HCT116 (cell line): ENCODE measurements at regions of chr5 and their contacts with region 1.

Region 1: DNA sequence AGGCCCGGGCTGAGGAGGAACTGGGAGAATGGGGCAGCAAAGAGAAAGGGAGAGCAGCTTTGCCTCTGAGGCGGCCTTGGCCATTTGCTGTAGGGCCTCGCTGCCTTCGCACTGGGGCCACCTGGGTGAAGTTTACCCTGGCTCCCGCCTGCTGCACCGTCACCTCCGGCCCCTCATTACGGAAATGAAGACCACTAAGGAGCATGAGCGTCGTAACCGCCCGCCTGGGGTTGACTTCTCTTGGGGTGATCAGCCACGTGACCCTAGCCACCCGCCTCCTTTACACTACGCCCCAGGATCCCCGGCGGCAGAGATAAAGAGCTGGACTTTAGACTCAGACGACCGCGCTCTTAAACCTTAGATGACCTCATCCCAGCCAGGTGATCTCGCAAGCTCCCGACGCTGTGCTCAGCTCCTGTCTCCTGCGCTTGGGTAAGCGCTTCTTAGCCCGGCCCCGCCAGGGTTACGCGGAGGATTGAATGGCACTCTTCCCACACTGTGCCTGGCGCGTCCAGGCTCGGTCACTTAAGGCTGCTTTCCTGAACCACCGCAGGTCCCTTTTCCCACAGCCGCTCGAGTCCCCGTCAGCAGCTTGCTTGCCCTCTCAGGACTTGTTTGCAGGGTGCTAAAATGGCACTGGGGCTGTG is 107.9 kb upstream of the LARP1 start:
- DNase-seq: no peak
- ATAC-seq: no peak
- H3K4me3 ChIP-seq: no peak overlapping the region
- H3K27ac ChIP-seq: no peak overlapping the region
- H3K4me1 ChIP-seq: no peaks in the 10 kb centered on the region
- H3K27me3 ChIP-seq: no peaks in the 10 kb centered on the region
- CTCF ChIP-seq: no peak
- POLR2A ChIP-seq: no peak
- RAD21 ChIP-seq: no peak

Region 2: DNA sequence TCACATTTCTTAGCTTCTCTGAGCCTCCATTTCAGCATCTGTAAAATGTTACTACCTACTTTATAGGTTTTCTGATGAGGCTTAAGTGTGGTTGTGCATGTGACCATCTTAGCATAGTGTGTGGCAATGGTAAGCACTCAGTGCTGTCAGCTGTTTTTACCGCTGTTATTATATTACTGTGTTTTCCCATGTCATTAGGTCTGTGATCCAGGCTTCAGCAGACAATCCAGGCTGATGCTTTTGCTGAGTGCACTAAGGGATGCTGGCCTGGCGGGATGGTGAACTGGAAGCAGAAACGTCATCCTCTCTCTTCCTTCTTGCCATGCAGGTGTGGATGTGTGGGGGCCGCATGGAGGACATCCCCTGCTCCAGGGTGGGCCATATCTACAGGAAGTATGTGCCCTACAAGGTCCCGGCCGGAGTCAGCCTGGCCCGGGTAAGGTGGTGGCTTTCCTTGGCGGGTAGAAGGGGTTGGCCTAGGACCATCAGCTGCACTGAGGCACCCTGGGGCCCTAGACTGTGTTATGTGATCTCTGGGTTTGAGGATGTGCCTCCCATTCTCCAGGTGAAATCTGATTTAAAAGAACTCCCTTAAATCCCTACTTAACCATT is 243.4 kb before region 1 on chr5:
- CTCF ChIA-PET with region 1: no interaction called
- POLR2A ChIA-PET with region 1: no interaction called
- RAD21 ChIA-PET with region 1: no interaction called
- intact Hi-C with region 1: no loop called
- DNase-seq: no peak
- ATAC-seq: no peak
- H3K4me3 ChIP-seq: no peak overlapping the region
- H3K27ac ChIP-seq: no peak overlapping the region
- H3K4me1 ChIP-seq: peaks cover 8 to 23% of the 10 kb centered on the region in 2 experiments; a peak in 3 of 4 replicates
- H3K27me3 ChIP-seq: no peaks in the 10 kb centered on the region
- CTCF ChIP-seq: no peak
- POLR2A ChIP-seq: no peak
- RAD21 ChIP-seq: no peak

Region 3: GRCh38 chr5:154415114-154415513 is 232.1 kb before region 1 on chr5:
- CTCF ChIA-PET with region 1: no interaction called
- POLR2A ChIA-PET with region 1: no interaction called
- RAD21 ChIA-PET with region 1: no interaction called
- intact Hi-C with region 1: no loop called
- DNase-seq: no peak
- ATAC-seq: no peak
- H3K4me3 ChIP-seq: no peak overlapping the region
- H3K27ac ChIP-seq: no peak overlapping the region
- H3K4me1 ChIP-seq: no peaks in the 10 kb centered on the region
- H3K27me3 ChIP-seq: no peaks in the 10 kb centered on the region
- CTCF ChIP-seq: no peak
- POLR2A ChIP-seq: no peak
- RAD21 ChIP-seq: no peak

Region 4: DNA sequence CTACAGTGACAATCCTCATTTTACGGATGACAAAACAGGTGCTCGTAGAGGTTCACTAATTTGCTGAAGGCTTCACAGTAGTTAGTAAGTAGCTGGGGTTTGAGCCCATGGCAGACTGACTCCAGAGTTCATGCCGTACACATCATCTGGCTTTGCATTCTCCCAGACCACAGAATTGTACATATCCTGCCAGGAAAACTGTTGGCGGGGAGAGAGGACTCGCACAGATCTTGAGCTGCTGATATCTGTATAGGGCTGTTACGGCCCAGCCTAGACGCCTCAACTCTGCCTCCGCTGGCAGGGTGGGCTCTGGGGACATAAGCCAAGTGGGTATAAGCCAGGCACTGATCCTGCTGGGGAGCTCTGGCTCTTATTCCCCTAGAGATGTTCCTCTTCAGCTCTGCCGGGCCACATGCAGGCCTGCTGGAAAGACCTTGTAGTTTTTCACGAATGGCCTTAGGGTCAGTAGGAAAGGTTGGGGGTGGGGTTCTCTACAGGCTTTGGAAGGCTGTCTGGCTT is 124.2 kb after region 1 on chr5:
- CTCF ChIA-PET with region 1: no interaction called
- POLR2A ChIA-PET with region 1: no interaction called
- RAD21 ChIA-PET with region 1: interaction called in 1 of 2 experiments, 11 read pairs
- intact Hi-C with region 1: no loop called
- DNase-seq: no peak
- ATAC-seq: no peak
- H3K4me3 ChIP-seq: no peak overlapping the region
- H3K27ac ChIP-seq: no peak overlapping the region
- H3K4me1 ChIP-seq: peaks cover 9 to 31% of the 10 kb centered on the region in 2 experiments; a peak in 3 of 4 replicates
- H3K27me3 ChIP-seq: no peaks in the 10 kb centered on the region
- CTCF ChIP-seq: no peak
- POLR2A ChIP-seq: no peak
- RAD21 ChIP-seq: no peak

Region 5: DNA sequence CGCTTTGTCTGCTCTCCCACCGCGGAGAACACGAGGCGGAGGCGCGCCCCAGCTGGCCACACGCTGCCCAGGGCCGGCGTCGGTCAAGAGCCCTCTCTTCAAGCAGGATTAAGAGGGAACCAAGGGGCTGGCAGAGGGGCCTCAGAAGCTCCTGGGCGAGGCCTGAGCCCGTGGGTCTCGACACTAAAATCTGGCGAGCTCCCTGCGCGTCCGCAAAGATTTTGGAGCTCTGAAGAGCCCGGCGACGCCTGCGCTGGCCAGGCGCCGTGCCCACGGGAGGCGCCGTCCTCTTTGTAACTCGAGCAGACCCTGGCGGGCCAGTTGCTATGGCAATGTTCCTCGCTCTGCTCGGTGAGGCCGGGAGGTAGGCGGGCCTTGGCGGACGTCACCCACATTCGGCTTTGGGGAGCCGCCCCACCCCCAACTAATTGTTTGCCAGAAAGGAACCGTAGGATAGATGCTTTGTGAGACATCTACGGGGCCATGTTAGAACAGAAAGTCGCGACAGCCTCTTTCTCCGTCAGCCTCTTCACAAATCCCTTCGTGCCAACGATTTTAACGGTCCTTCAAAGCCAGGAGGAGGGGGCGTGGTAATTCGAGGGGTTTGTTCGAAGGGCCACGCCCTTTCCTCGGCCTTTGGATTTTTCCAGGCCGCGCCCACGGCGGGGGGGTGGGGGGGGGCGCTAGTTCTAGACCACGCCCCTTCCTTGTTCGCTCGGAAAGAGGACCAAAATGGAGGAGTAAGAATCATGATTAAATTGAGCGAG is 210.5 kb after region 1 on chr5:
- CTCF ChIA-PET with region 1: interaction called, 3 read pairs
- POLR2A ChIA-PET with region 1: no interaction called
- RAD21 ChIA-PET with region 1: no interaction called
- intact Hi-C with region 1: loop called (anchors 2 kb)
- DNase-seq: peak; percentile 92
- ATAC-seq: peak; percentile 81
- H3K4me3 ChIP-seq: peak overlapping the region; percentile 76 to 95
- H3K27ac ChIP-seq: peak overlapping the region; percentile 94
- H3K4me1 ChIP-seq: peaks cover 17 to 22% of the 10 kb centered on the region in 2 experiments
- H3K27me3 ChIP-seq: no peaks in the 10 kb centered on the region
- CTCF ChIP-seq: no peak
- POLR2A ChIP-seq: peak; percentile 68
- RAD21 ChIP-seq: no peak

Region 6: DNA sequence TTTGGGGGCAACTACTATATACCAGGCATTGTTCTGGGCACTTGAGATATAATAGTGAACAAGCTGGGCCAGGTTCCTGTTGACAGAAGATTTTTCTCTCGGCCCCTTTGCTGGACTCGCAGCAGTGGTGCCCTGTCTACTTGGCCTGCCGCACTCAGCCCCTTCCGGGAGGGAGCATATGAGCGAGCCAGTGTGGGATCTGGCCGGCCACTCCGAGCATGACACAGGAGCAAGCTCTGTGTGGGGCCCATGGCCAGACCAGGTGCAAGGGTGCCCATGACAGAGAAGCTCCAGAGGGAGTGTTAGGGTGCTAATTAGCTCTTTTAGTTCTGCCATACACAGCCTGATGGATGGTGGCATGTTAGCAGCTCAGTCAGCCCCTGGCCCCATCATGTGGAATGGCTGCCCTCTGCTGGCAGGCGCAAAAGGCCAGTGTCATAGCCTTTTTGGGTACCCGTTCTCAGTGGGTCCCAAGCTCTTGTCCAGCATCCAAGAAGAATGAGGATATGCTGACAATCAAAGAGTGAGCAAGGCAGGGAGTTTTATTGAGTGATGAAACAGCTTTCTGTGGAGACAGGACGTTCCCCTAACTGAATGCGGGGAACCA is 357.0 kb after region 1 on chr5:
- CTCF ChIA-PET with region 1: interaction called, 17 read pairs
- POLR2A ChIA-PET with region 1: no interaction called
- RAD21 ChIA-PET with region 1: no interaction called
- intact Hi-C with region 1: loop called (anchors 1 kb)
- DNase-seq: peak; percentile 31
- ATAC-seq: peak; percentile 89
- H3K4me3 ChIP-seq: no peak overlapping the region
- H3K27ac ChIP-seq: no peak overlapping the region
- H3K4me1 ChIP-seq: peaks cover 4 to 18% of the 10 kb centered on the region in 2 experiments; a peak in 2 of 4 replicates
- H3K27me3 ChIP-seq: no peaks in the 10 kb centered on the region
- CTCF ChIP-seq: peak; percentile 69 to 81 (median 75)
- POLR2A ChIP-seq: no peak
- RAD21 ChIP-seq: peak; percentile 90

Region 7: DNA sequence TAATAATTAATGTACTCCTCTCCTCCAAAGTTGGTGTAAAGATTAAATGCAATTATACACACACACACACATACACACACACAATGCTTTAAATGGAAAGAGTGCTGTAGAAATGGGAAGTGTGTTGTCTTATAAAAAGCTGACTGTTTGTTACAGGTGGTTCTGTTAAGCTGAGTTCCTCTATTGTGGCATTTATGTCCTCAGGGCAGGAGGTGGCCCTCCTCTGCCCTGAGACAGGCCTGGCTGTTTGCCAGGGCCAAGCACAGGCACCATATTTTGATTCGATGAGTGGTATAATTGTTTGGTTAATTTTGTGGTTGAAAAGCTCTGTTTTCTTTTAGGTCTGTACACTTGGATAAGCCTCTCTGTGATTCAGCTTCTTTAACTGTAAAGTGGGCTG is 940.2 kb after region 1 on chr5:
- CTCF ChIA-PET with region 1: no interaction called
- POLR2A ChIA-PET with region 1: no interaction called
- RAD21 ChIA-PET with region 1: no interaction called
- intact Hi-C with region 1: no loop called
- DNase-seq: no peak
- ATAC-seq: no peak
- H3K4me3 ChIP-seq: no peak overlapping the region
- H3K27ac ChIP-seq: no peak overlapping the region
- H3K4me1 ChIP-seq: no peaks in the 10 kb centered on the region; a peak in 1 of 4 replicates
- H3K27me3 ChIP-seq: no peaks in the 10 kb centered on the region
- CTCF ChIP-seq: no peak
- POLR2A ChIP-seq: no peak
- RAD21 ChIP-seq: no peak